Kidney (tissue), 22 donors: ENCODE measurements at regions of chr20 and their contacts with region 1.

Region 1: GRCh38 chr20:62899690-62900051 is 26.6 kb downstream of the DIDO1 start:
- DNase-seq: peak in 3 of 5 donors; percentile 39 to 65 (median 56)
- H3K4me3 ChIP-seq: no peak overlapping the region
- H3K27ac ChIP-seq: no peak overlapping the region
- H3K4me1 ChIP-seq: peaks cover 0 to 13% (median 0%) of the 10 kb centered on the region in 3 donors
- H3K27me3 ChIP-seq: no peaks in the 10 kb centered on the region
- CTCF ChIP-seq: no peak

Region 2: GRCh38 chr20:62837800-62838454 is 61.7 kb before region 1 on chr20:
- intact Hi-C with region 1: no loop called
- DNase-seq: peak in 1 of 5 donors; percentile 91
- H3K4me3 ChIP-seq: no peak overlapping the region
- H3K27ac ChIP-seq: no peak overlapping the region
- H3K4me1 ChIP-seq: peaks cover 0 to 3% (median 2%) of the 10 kb centered on the region in 3 donors
- H3K27me3 ChIP-seq: no peaks in the 10 kb centered on the region
- CTCF ChIP-seq: no peak

Region 3: GRCh38 chr20:62989201-62989601 is 89.5 kb after region 1 on chr20:
- intact Hi-C with region 1: no loop called
- DNase-seq: no peak
- H3K4me3 ChIP-seq: no peak overlapping the region
- H3K27ac ChIP-seq: no peak overlapping the region
- H3K4me1 ChIP-seq: no peaks in the 10 kb centered on the region
- H3K27me3 ChIP-seq: no peaks in the 10 kb centered on the region
- CTCF ChIP-seq: no peak

Region 4: GRCh38 chr20:63009045-63009961 is 109.6 kb after region 1 on chr20:
- intact Hi-C with region 1: loop called (anchors 10 kb)
- DNase-seq: peak in 4 of 5 donors; percentile 83 to 84 (median 84)
- H3K4me3 ChIP-seq: no peak overlapping the region
- H3K27ac ChIP-seq: no peak overlapping the region
- H3K4me1 ChIP-seq: no peaks in the 10 kb centered on the region
- H3K27me3 ChIP-seq: peaks cover 31% of the 10 kb centered on the region
- CTCF ChIP-seq: peak; percentile 93